ENCODE measurements at regions of chr10 and their contacts with region 1.

Region 1: GRCh38 chr10:77111611-77112550 is 525.7 kb downstream of the KCNMA1 start:
- DNase-seq: no peak
- H3K4me3 ChIP-seq: no peak overlapping the region
- H3K27ac ChIP-seq: no peak overlapping the region
- H3K4me1 ChIP-seq: peaks cover 0 to 5% of the 10 kb centered on the region in 2 donors
- H3K27me3 ChIP-seq: no peaks in the 10 kb centered on the region
- CTCF ChIP-seq: peak; percentile 64 to 87 (median 80)
- POLR2A ChIP-seq: no peak

Region 2: GRCh38 chr10:77036993-77037734 is 74.7 kb before region 1 on chr10:
- intact Hi-C with region 1: loop called (anchors 10 kb)
- DNase-seq: no peak
- H3K4me3 ChIP-seq: no peak overlapping the region
- H3K27ac ChIP-seq: no peak overlapping the region
- H3K4me1 ChIP-seq: no peaks in the 10 kb centered on the region
- H3K27me3 ChIP-seq: no peaks in the 10 kb centered on the region
- CTCF ChIP-seq: peak in 5 of 6 experiments; percentile 20 to 51 (median 40)
- POLR2A ChIP-seq: no peak